Psoas muscle (tissue), 8 donors: ENCODE measurements at regions of chr5 and their contacts with region 1.

Region 1: GRCh38 chr5:139517683-139518564 is 35.4 kb upstream of the STING1 start:
- DNase-seq: peak; percentile 92 to 96
- ATAC-seq: peak; percentile 89 to 93 (median 92)
- H3K4me3 ChIP-seq: peak overlapping the region; percentile 70
- H3K27ac ChIP-seq: peak overlapping the region; percentile 90
- H3K4me1 ChIP-seq: no peaks in the 10 kb centered on the region
- H3K27me3 ChIP-seq: no peaks in the 10 kb centered on the region
- CTCF ChIP-seq: peak; percentile 99

Region 2: DNA sequence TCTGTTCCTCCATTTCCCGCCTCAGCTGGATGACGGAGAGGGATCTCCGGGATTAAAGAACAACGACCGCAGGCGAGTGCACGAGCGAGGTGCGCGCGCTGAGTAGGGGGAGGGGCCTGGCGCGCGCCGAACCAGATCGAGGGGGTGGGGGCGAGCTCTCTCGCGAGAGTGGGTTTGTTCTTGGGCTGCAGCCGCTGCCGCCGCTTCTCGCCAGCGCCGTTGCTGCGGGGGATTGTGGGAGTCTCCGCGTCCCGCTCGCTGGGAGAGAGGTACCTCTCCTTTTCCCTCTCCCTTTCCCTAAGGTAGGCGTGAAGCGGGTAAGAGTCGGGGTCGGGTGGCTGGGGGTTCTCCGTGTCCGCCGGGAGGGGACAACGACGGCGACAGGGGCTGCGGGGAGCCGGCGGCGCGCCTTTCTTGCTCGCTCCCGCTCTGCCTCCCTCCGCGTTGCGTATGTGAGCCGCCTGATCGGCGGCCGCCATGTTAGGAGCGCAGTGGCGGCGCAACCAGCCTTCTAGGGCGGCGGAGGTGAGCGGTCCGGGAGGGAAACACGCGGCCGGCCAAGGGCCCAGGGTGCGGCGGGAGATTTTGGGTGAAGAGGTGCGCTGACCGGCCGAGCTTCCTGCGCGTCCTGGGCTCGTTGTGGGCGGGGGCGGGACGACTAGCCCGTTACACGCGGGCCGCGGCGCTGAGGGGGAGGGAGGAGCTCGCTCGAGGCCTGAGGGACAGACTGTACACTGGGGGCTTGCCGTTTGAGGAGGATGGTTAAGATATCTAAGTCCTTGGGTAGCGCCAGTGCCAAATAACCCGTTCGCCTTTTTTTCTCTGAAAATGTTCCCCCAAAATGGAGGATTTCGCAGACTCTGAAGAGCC is 224.2 kb before region 1 on chr5 and contains the start of gene MATR3:
- intact Hi-C with region 1: loop called in 1 of 2 experiments (anchors 10 kb)
- DNase-seq: peak; percentile 95 to 98
- ATAC-seq: peak; percentile 94 to 96 (median 95)
- H3K4me3 ChIP-seq: peak within 1 kb of the TSS; percentile 96
- H3K27ac ChIP-seq: peak within 1 kb of the TSS; percentile 100
- H3K4me1 ChIP-seq: peaks cover 37% of the 10 kb centered on the region
- H3K27me3 ChIP-seq: no peaks in the 10 kb centered on the region
- CTCF ChIP-seq: no peak
- total RNA-seq, gene MATR3: 96.5 to 153 (median 134) TPM

Region 3: GRCh38 chr5:139341650-139342422 is 176.1 kb before region 1 on chr5 and contains the start of gene PAIP2:
- intact Hi-C with region 1: no loop called
- DNase-seq: peak; percentile 98 to 99
- ATAC-seq: peak; percentile 96 to 97 (median 96)
- H3K4me3 ChIP-seq: peak within 1 kb of the TSS; percentile 98
- H3K27ac ChIP-seq: peak within 1 kb of the TSS; percentile 100
- H3K4me1 ChIP-seq: peaks cover 25% of the 10 kb centered on the region
- H3K27me3 ChIP-seq: no peaks in the 10 kb centered on the region
- CTCF ChIP-seq: peak; percentile 72
- total RNA-seq, gene PAIP2: 111 to 144 (median 116) TPM

Region 4: DNA sequence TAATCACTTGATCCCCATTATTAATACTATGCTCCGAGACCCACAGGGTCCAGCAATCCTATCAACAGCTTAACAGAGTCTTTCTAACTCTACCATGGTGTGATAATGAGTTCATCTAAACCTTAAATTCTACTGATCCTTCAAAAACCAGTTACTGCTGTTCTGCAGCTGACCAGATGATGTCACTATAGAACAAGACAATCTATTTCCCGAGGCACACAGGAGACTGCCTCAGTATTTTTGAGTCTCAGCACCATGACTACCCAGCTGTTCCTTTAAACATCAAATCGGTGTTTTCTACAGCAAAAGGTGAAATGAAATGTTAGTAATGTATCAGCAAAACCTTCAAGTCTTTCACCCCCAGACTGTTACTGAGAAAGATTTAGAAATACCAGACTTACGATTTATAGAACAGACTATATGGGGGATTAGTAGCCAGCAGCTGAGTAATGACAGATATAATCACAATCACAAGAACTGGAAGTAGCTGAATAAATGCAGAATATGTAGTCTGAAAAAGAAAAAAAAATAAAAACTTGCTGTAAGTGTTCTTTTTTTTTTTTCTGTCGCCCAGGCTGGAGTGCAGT is 95.5 kb before region 1 on chr5:
- intact Hi-C with region 1: loop called (anchors 1 to 2 kb)
- DNase-seq: no peak
- ATAC-seq: peak; percentile 55 to 65 (median 62)
- H3K4me3 ChIP-seq: no peak overlapping the region
- H3K27ac ChIP-seq: no peak overlapping the region
- H3K4me1 ChIP-seq: peaks cover 38% of the 10 kb centered on the region
- H3K27me3 ChIP-seq: no peaks in the 10 kb centered on the region
- CTCF ChIP-seq: peak; percentile 83

Region 5: GRCh38 chr5:139435676-139436075 is 82.2 kb before region 1 on chr5:
- intact Hi-C with region 1: no loop called
- DNase-seq: no peak
- ATAC-seq: no peak
- H3K4me3 ChIP-seq: no peak overlapping the region
- H3K27ac ChIP-seq: no peak overlapping the region
- H3K4me1 ChIP-seq: peaks cover 12% of the 10 kb centered on the region
- H3K27me3 ChIP-seq: no peaks in the 10 kb centered on the region
- CTCF ChIP-seq: no peak

Region 6: GRCh38 chr5:139660923-139661814 is 143.2 kb after region 1 on chr5:
- intact Hi-C with region 1: no loop called
- DNase-seq: peak; percentile 94 to 97
- ATAC-seq: peak; percentile 74 to 82 (median 80)
- H3K4me3 ChIP-seq: peak overlapping the region; percentile 62
- H3K27ac ChIP-seq: peak overlapping the region; percentile 98
- H3K4me1 ChIP-seq: peaks cover 99% of the 10 kb centered on the region
- H3K27me3 ChIP-seq: no peaks in the 10 kb centered on the region
- CTCF ChIP-seq: no peak